Heart right ventricle (tissue), 16 donors: ENCODE measurements at regions of chr17 and their contacts with region 1.

Region 1: GRCh38 chr17:38322091-38322779 is 21.5 kb downstream of the GPR179 start:
- DNase-seq: peak; percentile 33 to 61
- ATAC-seq: peak; percentile 30 to 72 (median 69)
- H3K4me3 ChIP-seq: no peak overlapping the region
- H3K27ac ChIP-seq: no peak overlapping the region
- H3K4me1 ChIP-seq: peaks cover 0 to 15% (median 9%) of the 10 kb centered on the region in 9 donors
- H3K27me3 ChIP-seq: no peaks in the 10 kb centered on the region
- CTCF ChIP-seq: peak; percentile 61 to 91 (median 83)

Region 2: GRCh38 chr17:38379438-38379837 is 57.2 kb after region 1 on chr17:
- intact Hi-C with region 1: loop called in 1 of 10 experiments (anchors 5 kb)
- DNase-seq: no peak
- ATAC-seq: no peak
- H3K4me3 ChIP-seq: no peak overlapping the region
- H3K27ac ChIP-seq: no peak overlapping the region
- H3K4me1 ChIP-seq: no peaks in the 10 kb centered on the region
- H3K27me3 ChIP-seq: no peaks in the 10 kb centered on the region
- CTCF ChIP-seq: no peak

Region 3: DNA sequence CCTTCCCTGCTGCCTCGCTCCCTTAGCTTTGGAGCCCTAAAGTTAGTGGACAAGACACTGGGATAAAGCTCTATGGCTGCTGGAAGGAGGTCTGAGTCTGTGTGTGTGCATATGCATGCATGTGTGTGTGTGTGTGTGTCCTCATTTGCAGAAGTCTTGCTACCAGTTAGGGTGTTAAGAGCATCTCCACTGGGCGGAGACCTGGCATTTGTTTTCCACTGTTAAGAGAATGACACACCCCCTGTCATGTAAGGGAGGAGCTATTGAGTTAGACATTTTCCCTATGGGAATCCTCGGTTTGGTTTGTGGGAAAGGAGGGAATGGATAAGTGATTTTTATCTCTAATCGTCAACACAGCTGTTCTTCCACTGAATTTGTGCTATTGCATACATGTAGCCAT is 81.3 kb after region 1 on chr17:
- intact Hi-C with region 1: loop called in 1 of 10 experiments (anchors 10 kb)
- DNase-seq: no peak
- ATAC-seq: peak in 4 of 8 donors; percentile 17 to 62 (median 40)
- H3K4me3 ChIP-seq: no peak overlapping the region
- H3K27ac ChIP-seq: no peak overlapping the region
- H3K4me1 ChIP-seq: peaks cover 0 to 5% (median 0%) of the 10 kb centered on the region in 9 donors
- H3K27me3 ChIP-seq: no peaks in the 10 kb centered on the region
- CTCF ChIP-seq: no peak